AG04449 (cell line): ENCODE measurements at regions of chr22 and their contacts with region 1.

Region 1: GRCh38 chr22:31230871-31231621 is 18.9 kb downstream of the LIMK2 start:
- DNase-seq: no peak
- H3K4me3 ChIP-seq: no peak overlapping the region
- CTCF ChIP-seq: peak; percentile 68

Region 2: GRCh38 chr22:30947816-30948454 is 283.1 kb before region 1 on chr22:
- CTCF ChIA-PET with region 1: interaction called, 17 read pairs
- POLR2A ChIA-PET with region 1: no interaction called
- DNase-seq: peak; percentile 16
- H3K4me3 ChIP-seq: no peak overlapping the region
- CTCF ChIP-seq: peak; percentile 40

Region 3: GRCh38 chr22:31148953-31149627 is 82.0 kb before region 1 on chr22:
- CTCF ChIA-PET with region 1: interaction called, 12 read pairs
- POLR2A ChIA-PET with region 1: no interaction called
- DNase-seq: no peak
- H3K4me3 ChIP-seq: no peak overlapping the region
- CTCF ChIP-seq: peak; percentile 97

Region 4: DNA sequence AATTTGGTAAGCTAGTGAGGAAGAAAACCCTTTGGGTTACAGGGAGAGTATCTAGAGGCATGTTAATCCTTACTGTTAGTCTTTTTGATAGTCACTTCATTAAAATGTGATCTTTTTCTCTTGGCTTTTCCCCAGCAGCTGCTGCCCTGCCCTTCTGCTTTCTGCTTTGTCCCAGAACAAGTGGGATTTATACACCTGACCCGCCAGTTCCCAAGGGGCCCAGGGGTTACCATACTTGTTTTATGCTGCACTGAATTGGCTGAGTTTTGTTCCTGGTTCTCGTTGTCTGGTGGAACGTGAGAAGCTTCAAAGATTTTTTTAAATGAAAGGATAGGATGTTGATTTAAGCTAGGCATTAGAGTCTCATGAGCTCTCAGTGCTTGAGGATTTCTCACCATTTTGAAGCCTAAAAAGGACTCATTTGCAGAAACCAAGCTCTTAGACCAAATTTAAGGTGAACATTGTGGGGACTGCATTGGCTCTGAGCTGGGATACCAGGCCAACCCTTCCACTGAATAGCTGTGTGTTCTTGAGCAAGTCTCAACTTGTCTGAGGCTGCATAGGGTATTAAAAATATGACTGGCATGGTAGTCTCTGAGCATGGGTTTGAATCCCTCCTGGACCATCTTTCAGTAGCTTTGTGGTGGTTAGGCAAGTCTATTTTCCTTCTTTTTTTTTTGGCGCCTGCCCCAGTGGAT is 12.3 kb before region 1 on chr22:
- CTCF ChIA-PET with region 1: interaction called, 201 read pairs
- POLR2A ChIA-PET with region 1: no interaction called
- DNase-seq: no peak
- H3K4me3 ChIP-seq: no peak overlapping the region
- CTCF ChIP-seq: no peak

Region 5: DNA sequence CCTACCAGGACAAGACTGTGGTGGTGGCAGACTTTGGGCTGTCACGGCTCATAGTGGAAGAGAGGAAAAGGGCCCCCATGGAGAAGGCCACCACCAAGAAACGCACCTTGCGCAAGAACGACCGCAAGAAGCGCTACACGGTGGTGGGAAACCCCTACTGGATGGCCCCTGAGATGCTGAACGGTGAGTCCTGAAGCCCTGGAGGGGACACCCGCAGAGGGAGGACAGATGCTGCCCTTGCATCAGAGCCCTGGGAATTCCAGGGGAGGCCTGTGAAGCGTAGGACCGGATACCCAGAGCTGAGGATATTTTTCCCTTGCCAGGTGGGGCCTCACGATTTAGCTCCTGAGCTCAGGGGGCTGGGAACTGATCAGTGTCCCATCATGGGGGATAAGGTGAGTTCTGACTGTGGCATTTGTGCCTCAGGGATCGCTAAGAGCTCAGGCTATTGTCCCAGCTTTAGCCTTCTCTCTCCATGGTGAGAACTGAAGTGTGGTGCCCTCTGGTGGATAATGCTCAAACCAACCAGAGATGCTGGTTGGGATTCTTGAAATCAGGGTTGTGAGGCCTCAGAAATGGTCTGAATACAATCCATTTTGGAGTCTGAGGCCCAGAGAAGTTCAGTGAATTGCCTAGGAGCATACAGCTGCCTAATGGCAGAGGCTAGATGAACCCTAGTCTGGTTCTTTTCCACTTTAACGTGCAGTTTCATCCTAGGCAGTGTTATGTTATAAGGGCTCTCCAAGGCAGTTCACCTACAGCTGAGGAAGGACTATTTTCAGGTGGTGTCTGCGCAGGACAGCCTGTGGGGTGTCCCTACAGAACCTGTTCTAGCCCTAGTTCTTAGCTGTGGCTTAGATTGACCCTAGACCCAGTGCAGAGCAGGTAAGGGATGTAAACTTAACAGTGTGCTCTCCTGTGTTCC is 41.7 kb after region 1 on chr22:
- CTCF ChIA-PET with region 1: interaction called, 32 read pairs
- POLR2A ChIA-PET with region 1: no interaction called
- DNase-seq: no peak
- H3K4me3 ChIP-seq: no peak overlapping the region
- CTCF ChIP-seq: peak; percentile 74

Region 6: DNA sequence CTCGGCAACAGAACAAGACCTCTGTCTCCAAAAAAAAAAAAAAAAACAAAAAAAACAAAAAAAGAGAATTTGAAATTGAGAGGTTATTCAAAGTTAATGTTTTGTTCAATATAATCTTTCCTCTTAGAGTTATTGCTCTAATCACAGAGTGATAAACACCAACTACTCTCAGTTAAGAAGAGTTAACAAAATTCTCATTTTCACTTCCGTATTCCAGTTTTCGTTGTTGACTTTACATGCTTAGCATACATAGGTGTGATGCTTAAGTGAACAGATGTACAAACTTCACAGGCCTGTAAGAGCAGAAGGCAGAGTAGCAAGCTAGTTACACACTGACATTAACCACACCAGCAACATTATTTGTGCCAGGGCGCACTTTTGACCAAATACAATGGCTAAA is 246.3 kb after region 1 on chr22:
- CTCF ChIA-PET with region 1: no interaction called
- POLR2A ChIA-PET with region 1: no interaction called
- DNase-seq: no peak
- H3K4me3 ChIP-seq: no peak overlapping the region
- CTCF ChIP-seq: no peak